ENCODE measurements at regions of chr15 and their contacts with region 1.

Region 1: GRCh38 chr15:72671535-72671934 is 14.4 kb downstream of the HIGD2B start:
- DNase-seq: no peak
- H3K27ac ChIP-seq: no peak overlapping the region
- CTCF ChIP-seq: no peak

Region 2: GRCh38 chr15:72599855-72600464 is 71.6 kb before region 1 on chr15:
- CTCF ChIA-PET with region 1: interaction called, 12 read pairs
- POLR2A ChIA-PET with region 1: no interaction called
- DNase-seq: peak; percentile 56
- H3K27ac ChIP-seq: no peak overlapping the region
- CTCF ChIP-seq: peak; percentile 91

Region 3: DNA sequence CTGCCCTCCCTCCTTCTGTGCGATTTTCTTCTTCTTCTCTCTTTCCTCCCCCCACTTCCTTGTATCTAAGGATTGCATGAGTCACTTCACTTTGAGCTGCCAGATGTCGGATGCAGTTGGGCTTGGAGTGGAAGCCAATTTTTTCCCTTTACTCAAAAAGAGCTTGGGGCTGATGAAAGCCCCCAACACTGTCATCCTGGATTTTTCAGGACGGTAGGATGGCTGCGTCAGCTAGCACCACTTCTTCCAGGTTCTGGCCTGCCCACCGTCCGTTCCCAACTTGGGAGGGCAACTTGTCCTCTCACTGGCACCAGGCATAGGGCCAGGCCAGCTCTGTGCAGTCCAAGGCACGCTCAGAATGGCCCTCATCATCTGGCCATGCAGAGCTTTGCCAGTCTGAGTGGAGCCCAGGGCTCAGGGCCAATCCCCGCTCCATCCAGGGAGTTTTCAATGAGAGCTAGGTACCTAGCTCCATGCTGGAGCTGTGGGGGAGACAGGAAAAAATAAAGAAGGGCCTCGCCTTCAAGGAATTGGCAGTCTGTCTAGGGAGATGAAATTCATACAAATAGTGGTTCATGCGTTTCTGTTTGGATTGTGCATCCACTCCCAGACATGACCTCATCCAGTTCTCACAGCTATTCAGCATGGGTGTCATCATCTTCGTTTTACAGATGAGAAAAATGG is 1129.3 kb after region 1 on chr15:
- CTCF ChIA-PET with region 1: no interaction called
- POLR2A ChIA-PET with region 1: no interaction called
- DNase-seq: peak; percentile 80
- H3K27ac ChIP-seq: peak overlapping the region; percentile 95
- CTCF ChIP-seq: no peak